ENCODE measurements at regions of chr1 and their contacts with region 1.

Region 1: DNA sequence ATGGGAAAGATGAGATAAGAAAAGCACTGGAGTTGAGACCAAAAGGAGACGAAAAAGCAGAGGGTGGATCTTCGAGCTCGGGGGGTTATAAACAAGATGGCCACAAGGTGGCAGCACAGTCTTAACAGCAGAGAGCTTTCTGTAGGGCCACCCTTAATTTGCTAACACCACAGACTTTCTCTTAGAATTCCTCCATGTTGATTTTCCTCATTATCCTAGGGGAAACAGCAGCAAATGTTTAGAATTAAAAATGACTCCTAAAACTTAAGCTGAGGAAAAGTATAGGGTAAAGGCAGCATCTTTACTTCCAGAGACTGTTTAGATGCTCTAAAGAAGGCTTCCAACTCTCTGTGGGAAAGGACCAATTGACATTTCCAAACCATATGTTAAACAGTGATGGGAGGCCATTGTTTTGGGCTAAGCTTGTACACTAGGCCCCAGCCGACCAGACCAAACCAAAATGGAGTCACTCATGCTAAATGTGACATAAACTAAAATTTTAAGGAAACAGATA is 2.5 kb upstream of the APOBEC4 start:
- DNase-seq: peak; percentile 16 to 87 (median 61)
- ATAC-seq: peak; percentile 62 to 78 (median 74)
- H3K4me3 ChIP-seq: no peak overlapping the region
- H3K4me3 Mint-ChIP-seq: no peak overlapping the region
- H3K27ac ChIP-seq: no peak overlapping the region
- H3K27ac Mint-ChIP-seq: peak overlapping the region in 1 of 2 donors; percentile 45
- H3K4me1 ChIP-seq: peaks cover 13 to 25% of the 10 kb centered on the region in 2 experiments
- H3K4me1 Mint-ChIP-seq: peaks cover 35 to 38% (median 36%) of the 10 kb centered on the region in 3 donors
- H3K27me3 ChIP-seq: no peaks in the 10 kb centered on the region
- H3K27me3 Mint-ChIP-seq: peaks cover 0 to under 1% of the 10 kb centered on the region in 2 donors

Region 2: GRCh38 chr1:183685112-183685713 is 29.6 kb after region 1 on chr1:
- CTCF ChIA-PET with region 1: interaction called, 29 to 40 read pairs
- POLR2A ChIA-PET with region 1: no interaction called
- DNase-seq: peak in 10 of 35 experiments; percentile 4 to 72 (median 16)
- ATAC-seq: peak; percentile 56 to 63 (median 58)
- H3K4me3 ChIP-seq: no peak overlapping the region
- H3K4me3 Mint-ChIP-seq: no peak overlapping the region
- H3K27ac ChIP-seq: no peak overlapping the region
- H3K27ac Mint-ChIP-seq: no peak overlapping the region
- H3K4me1 ChIP-seq: no peaks in the 10 kb centered on the region
- H3K4me1 Mint-ChIP-seq: no peaks in the 10 kb centered on the region
- H3K27me3 ChIP-seq: peaks cover 0 to 8% of the 10 kb centered on the region in 2 experiments
- H3K27me3 Mint-ChIP-seq: peaks cover 0 to 10% of the 10 kb centered on the region in 2 donors

Region 3: GRCh38 chr1:183711741-183712361 is 56.2 kb after region 1 on chr1:
- CTCF ChIA-PET with region 1: no interaction called
- POLR2A ChIA-PET with region 1: no interaction called
- DNase-seq: no peak
- ATAC-seq: no peak
- H3K4me3 ChIP-seq: no peak overlapping the region
- H3K4me3 Mint-ChIP-seq: no peak overlapping the region
- H3K27ac ChIP-seq: no peak overlapping the region
- H3K27ac Mint-ChIP-seq: no peak overlapping the region
- H3K4me1 ChIP-seq: no peaks in the 10 kb centered on the region
- H3K4me1 Mint-ChIP-seq: no peaks in the 10 kb centered on the region
- H3K27me3 ChIP-seq: no peaks in the 10 kb centered on the region
- H3K27me3 Mint-ChIP-seq: no peaks in the 10 kb centered on the region